RWPE1 (cell line): ENCODE measurements at regions of chr15 and their contacts with region 1.

Region 1: DNA sequence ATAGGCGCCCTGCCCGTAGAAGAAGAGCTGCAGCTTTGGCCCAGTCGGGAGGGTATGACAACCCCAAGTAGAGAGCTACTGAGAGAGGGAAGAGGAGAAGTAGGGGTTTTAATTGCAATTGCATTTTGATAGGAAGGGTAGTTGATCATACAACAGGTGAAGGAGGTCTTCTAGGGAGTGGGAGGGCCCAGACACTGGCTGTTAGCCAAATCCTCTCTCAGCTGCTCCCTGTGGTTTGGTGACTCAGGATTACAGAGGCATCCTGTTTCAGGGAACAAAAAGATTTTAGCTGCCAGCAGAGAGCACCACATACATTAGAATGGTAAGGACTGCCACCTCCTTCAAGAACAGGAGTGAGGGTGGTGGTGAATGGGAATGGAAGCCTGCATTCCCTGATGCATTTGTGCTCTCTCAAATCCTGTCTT is 408.9 kb upstream of the THBS1 start:
- DNase-seq: peak; percentile 94
- H3K27ac ChIP-seq: no peak overlapping the region; the same call in 1 of the 2 replicates
- CTCF ChIP-seq: peak; percentile 61

Region 2: GRCh38 chr15:39283531-39283930 is 111.6 kb after region 1 on chr15:
- CTCF ChIA-PET with region 1: no interaction called
- POLR2A ChIA-PET with region 1: no interaction called
- DNase-seq: no peak
- H3K27ac ChIP-seq: no peak overlapping the region
- CTCF ChIP-seq: no peak

Region 3: GRCh38 chr15:39580117-39580484 is 408.1 kb after region 1 on chr15:
- CTCF ChIA-PET with region 1: interaction called, 47 read pairs
- POLR2A ChIA-PET with region 1: interaction called, 9 read pairs
- DNase-seq: peak; percentile 87
- H3K27ac ChIP-seq: peak overlapping the region; percentile 95
- CTCF ChIP-seq: peak; percentile 99